PC-3 (cell line): ENCODE measurements at regions of chr6 and their contacts with region 1.

Region 1: DNA sequence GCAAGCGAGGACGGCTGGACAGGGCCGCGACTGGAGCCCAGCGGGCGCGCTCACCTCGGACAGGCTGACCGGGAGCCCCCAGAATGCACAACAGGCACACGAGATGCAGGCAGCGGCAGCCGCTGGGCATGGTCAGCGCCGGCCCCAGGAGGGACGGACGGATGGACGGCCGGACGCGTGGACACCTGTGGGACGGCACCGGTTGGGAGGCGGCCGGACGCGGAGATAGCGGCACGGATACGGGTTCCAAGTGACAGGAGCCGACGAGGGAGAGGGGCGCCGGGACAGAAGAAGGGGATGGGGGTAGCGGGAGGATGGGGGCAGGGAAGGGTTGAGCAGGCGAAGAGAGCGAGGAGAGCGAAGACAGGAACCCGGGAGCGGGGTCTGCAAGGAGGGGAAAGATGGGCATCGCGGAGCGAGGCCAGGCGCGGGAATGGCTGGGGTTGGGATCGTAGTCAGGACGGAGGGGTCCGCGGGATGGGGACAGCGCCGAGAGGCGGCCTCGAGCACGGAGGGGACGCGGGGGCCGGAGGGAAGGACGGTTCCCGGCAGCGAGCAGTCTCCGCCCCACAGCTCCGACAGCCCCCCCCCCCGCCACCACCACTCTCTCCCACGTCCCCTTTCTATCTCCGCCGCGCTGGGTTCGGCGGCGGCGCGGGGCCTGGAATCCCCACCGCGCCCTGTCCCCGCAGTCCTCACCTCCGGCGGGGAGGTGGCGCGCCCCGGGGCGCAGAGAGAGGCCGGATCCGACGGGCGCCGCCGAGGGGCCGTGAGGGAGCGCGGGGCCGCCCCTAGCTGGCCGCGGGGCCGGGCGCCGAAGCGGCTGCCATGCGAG is 435 bp downstream of the DLK2 start:
- DNase-seq: no peak
- ATAC-seq: peak; percentile 74
- H3K4me3 ChIP-seq: peak overlapping the region; percentile 71
- H3K27ac ChIP-seq: no peak overlapping the region
- H3K4me1 ChIP-seq: peaks cover 5% of the 10 kb centered on the region; the same call in 1 of the 2 replicates
- H3K27me3 ChIP-seq: no peaks in the 10 kb centered on the region
- CTCF ChIP-seq: 0 out of 2 replicates have a peak, but pooled peaks have one; percentile 14

Region 2: GRCh38 chr6:43469947-43470346 is 15.0 kb after region 1 on chr6:
- CTCF ChIA-PET with region 1: no interaction called
- POLR2A ChIA-PET with region 1: interaction called, 13 read pairs
- intact Hi-C with region 1: no loop called
- DNase-seq: no peak
- ATAC-seq: no peak
- H3K4me3 ChIP-seq: no peak overlapping the region
- H3K27ac ChIP-seq: no peak overlapping the region
- H3K4me1 ChIP-seq: peaks cover 9% of the 10 kb centered on the region; the same call in 1 of the 2 replicates
- H3K27me3 ChIP-seq: no peaks in the 10 kb centered on the region
- CTCF ChIP-seq: no peak

Region 3: DNA sequence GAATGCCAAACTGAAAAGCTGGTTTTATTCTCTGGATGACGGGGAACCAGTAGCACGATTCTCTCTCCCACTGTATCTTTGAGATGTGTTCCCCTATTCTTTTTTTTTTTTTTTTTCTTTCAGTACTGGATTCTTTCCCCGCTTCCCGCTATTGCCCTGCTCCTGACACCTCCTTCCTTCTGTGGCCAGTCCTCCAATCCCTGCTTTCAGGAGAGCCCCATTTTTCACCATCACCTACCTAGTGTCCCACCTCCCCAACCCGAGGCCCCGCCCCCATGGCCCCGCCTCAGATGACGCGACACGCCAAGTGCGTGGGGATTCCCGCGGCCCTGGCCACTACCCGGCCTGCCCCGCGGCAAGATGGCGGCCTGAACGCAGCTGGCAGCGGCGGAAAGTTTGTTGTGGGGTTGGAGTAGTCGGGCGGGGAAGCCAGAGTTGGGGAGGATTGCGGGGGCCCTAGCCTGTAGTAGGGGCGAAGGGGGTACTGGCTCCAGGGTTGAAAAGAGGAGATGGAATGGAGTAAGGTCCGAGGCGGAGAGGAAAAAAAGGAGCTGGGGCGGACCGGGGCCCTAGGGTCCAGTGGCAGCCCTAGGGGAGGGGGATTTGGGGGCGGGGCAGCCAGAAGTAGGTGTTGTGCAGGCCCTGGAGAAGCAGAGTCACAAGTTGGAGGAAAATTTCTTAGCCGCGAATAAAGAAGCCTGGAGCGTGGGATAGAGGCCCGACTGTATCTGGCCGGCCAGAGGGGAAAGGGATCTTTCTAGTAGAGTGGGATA is 22.5 kb after region 1 on chr6 and contains the start of gene TJAP1:
- CTCF ChIA-PET with region 1: no interaction called
- POLR2A ChIA-PET with region 1: no interaction called
- intact Hi-C with region 1: loop called (anchors 2 kb)
- DNase-seq: peak; percentile 89
- ATAC-seq: peak; percentile 87
- H3K4me3 ChIP-seq: peak within 1 kb of the TSS; percentile 90
- H3K27ac ChIP-seq: 0 out of 2 replicates have a peak within 1 kb of the TSS, but pooled peaks have one; percentile 15
- H3K4me1 ChIP-seq: peaks cover 41% of the 10 kb centered on the region
- H3K27me3 ChIP-seq: no peaks in the 10 kb centered on the region
- CTCF ChIP-seq: no peak
- total RNA-seq, gene TJAP1: 28.5 and 40.0 TPM in 2 replicates

Region 4: DNA sequence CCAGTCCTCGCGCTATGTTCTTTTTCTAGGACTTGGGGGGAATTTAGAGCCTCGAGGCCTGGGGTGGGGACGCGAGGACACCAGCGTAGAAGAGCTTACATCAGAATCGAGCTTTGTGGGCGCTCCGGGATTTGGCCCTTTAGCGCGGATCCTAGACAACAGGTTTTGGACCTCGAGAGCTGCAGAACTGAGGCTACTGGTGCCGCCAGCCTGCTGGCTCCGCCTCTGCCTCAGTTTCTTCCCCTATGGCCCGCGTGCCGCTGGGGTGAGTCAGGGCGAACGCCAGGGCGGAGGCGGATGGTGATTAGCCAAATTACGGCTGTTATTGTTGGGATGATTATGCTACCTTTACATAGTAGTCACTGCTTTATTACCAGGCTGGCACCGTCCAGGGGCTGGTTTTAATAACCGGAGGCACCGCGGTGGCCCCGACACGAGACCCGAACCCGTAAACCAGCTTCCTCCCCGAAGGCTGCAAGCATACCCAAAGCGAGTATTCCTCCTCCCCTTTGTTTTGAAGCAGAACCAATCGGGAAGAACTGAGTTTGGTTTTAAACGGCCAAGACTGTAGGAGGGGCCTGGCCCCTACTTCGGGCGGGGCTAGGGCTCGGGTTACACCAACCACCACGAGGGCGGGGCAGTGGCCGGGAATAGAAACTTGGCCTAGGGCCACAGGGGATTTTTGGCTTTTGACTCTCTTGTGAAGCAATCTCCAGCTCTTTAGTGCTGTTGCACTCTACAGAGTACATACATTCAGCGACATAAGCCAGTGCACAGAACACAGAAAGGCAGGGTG is 174.8 kb after region 1 on chr6:
- CTCF ChIA-PET with region 1: no interaction called
- POLR2A ChIA-PET with region 1: no interaction called
- intact Hi-C with region 1: no loop called
- DNase-seq: peak; percentile 98
- ATAC-seq: peak; percentile 75
- H3K4me3 ChIP-seq: peak overlapping the region; percentile 76
- H3K27ac ChIP-seq: peak overlapping the region; percentile 85
- H3K4me1 ChIP-seq: peaks cover 27% of the 10 kb centered on the region
- H3K27me3 ChIP-seq: no peaks in the 10 kb centered on the region
- CTCF ChIP-seq: no peak